HEK293 (cell line): ENCODE measurements at regions of chr17 and their contacts with region 1.

Region 1: DNA sequence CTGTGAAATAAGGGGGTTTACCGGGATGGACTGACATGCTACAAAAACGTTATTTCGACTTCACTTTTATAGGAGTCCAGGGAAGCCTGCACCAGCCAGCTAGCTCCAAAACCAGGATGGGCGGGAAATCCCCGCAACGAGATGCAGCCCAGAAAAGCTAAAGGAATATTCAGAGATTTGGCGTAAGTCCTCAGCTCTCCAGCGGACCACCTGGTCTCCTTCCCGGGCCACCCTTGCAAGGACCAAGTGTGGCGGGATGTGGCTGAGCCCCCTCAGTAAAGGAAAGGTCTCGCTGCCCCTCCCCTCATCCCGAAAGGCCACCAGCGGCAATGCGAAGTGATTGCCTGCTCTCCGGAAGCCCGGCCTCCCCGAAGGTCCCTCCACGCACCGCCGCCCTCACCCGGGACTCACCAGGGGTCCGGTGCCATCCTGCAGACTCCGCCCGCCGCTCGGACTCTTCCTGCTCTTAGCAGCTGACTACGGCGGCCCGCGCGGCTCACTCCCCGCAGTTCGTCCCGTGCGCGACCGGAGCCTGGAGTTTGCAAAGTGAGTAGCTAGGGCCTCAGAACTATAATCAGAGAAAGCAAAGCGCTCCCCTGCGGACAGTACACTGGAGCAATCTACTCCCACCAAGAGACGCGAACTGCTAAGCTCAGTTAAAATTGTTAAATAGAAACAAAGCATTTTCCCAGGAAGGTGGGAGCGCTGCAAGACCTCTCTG is at the start of gene STX8:
- H3K4me3 ChIP-seq: peak within 1 kb of the TSS; percentile 73
- H3K27ac ChIP-seq: peak within 1 kb of the TSS; percentile 80
- H3K4me1 ChIP-seq: peaks cover 7% of the 10 kb centered on the region
- CTCF ChIP-seq: peak; percentile 47; the same call in 1 of the 2 replicates

Region 2: DNA sequence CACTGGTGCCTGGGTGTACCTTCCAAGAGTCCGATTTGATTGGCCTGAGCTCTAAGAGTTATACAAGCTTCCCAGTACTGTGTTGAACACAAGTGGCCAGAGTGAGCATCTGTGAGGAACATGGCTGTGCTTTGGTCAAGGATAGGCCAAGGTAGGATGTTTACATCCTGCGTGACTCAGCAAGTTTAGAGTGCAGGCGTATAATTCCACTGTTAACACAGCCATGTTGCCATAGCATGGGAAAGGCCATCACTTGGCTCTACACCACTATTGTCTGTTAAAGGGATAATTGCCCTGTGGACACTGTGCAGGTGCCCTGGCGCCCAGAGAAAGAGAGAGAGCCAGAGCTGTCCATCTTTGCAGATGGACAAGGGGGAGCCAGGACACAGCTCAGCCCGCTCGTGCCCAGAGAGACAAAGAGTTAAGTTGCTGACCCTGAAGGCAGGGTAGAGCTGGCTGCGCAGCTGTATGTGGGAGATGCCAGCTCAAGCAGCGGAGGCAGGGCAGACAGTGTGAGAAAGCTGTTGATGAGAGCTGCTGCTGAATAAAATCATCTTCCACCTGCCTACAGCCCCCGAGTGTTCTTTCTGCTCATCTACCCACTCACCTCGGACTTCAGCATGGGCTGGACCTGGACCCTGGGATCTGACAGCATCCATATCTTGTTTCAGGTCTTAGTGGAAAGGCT is 12.6 kb after region 1 on chr17:
- CTCF ChIA-PET with region 1: interaction called, 26 read pairs
- POLR2A ChIA-PET with region 1: interaction called, 4 read pairs
- H3K4me3 ChIP-seq: no peak overlapping the region
- H3K27ac ChIP-seq: no peak overlapping the region
- H3K4me1 ChIP-seq: no peaks in the 10 kb centered on the region
- CTCF ChIP-seq: no peak

Region 3: DNA sequence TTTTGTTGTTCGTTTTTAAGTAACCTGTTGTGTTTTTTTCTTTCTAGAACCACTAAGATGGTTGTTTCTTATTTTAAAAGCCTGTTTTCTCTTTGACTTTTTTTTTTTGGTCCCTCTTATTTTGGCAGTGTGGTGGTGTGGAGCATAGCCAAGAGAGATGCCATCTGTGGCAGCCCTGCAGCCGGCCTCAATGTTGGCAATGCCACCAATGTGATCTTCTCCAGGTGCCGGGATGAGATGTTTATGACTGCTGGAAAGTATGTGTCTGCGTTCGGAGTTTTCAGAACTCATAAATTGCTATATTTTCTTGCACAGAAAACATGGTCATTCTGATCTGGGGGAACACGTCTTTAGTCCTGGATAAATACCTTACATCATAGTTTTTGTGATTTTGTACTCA is 18.5 kb after region 1 on chr17:
- CTCF ChIA-PET with region 1: interaction called, 26 read pairs
- POLR2A ChIA-PET with region 1: interaction called, 4 read pairs
- H3K4me3 ChIP-seq: no peak overlapping the region
- H3K27ac ChIP-seq: no peak overlapping the region
- H3K4me1 ChIP-seq: no peaks in the 10 kb centered on the region
- CTCF ChIP-seq: no peak

Region 4: DNA sequence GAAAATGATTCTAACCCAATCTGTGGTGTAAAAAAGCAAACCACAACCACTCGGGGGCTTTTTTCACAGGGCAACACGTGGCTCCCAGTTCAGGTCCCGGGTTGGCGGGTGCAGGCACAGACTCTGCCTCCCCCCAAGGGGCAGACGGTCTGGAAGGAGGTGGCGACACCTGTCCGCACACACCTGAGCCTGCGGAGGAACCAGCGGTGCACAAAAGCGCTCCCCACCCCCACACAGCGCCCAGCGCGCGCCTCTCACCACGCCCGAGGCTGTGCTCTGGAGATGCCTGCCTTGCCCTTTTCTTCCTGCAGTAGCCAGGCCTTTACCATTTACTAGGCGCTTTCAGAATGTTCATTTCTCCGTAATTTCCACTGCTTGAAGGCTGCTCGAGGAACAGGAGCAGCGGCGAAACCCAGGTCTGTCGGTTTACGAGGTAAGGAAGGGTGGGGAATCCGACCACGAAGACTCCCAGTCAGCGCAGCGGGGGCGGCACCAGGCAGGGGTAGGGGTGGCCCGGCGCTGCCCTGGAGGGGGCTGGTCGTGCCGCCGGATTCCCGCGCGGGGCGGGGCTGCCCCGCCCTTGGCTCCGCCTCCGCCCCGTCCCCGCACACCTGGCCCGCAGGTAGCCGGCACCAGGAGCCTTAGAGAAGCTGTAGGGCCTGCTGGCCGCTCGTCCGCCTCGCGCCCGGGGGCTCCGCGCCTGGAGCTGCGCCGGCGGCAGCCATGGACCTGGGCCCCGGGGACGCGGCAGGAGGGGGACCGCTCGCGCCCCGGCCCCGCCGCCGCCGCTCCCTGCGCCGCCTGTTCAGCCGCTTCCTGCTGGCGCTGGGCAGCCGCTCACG is 69.6 kb after region 1 on chr17 and contains the start of gene USP43:
- CTCF ChIA-PET with region 1: interaction called, 17 read pairs
- POLR2A ChIA-PET with region 1: interaction called, 14 read pairs
- H3K4me3 ChIP-seq: peak within 1 kb of the TSS; percentile 70
- H3K27ac ChIP-seq: peak within 1 kb of the TSS; percentile 85
- H3K4me1 ChIP-seq: peaks cover 11% of the 10 kb centered on the region
- CTCF ChIP-seq: 0 out of 2 replicates have a peak, but pooled peaks have one; percentile 13

Region 5: GRCh38 chr17:9676742-9677387 is 101.3 kb after region 1 on chr17:
- CTCF ChIA-PET with region 1: interaction called, 43 read pairs
- POLR2A ChIA-PET with region 1: no interaction called
- H3K4me3 ChIP-seq: no peak overlapping the region
- H3K27ac ChIP-seq: no peak overlapping the region
- H3K4me1 ChIP-seq: no peaks in the 10 kb centered on the region
- CTCF ChIP-seq: no peak

Region 6: DNA sequence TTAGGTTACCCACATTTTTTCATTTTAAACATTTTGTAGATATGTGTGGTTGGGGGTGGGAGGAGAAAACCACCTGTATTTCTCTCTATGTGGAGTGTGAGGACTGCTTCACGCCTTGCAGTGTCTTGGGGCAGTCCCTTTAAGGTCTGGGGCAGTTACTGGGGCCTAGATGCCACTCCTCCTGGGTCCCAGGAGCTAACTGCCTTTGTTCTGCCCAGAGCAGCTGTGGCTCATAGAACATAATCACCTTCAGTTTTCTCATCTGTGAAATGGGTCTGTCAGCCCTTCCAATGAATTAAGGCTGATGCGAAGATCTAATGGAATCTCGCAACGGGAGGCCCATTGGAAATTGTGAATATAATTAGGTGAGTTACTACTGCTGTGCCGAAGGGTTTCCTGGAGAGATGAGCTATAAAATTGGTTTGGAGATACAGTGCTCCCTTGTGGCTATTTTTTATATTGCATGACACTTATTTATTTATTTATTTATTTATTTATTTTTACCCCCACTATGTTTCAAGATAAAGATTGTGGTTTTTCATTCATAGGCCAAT is 192.9 kb after region 1 on chr17:
- CTCF ChIA-PET with region 1: interaction called, 22 read pairs
- POLR2A ChIA-PET with region 1: no interaction called
- H3K4me3 ChIP-seq: no peak overlapping the region
- H3K27ac ChIP-seq: no peak overlapping the region
- H3K4me1 ChIP-seq: no peaks in the 10 kb centered on the region
- CTCF ChIP-seq: no peak